AG04449 (cell line): ENCODE measurements at regions of chr5 and their contacts with region 1.

Region 1: DNA sequence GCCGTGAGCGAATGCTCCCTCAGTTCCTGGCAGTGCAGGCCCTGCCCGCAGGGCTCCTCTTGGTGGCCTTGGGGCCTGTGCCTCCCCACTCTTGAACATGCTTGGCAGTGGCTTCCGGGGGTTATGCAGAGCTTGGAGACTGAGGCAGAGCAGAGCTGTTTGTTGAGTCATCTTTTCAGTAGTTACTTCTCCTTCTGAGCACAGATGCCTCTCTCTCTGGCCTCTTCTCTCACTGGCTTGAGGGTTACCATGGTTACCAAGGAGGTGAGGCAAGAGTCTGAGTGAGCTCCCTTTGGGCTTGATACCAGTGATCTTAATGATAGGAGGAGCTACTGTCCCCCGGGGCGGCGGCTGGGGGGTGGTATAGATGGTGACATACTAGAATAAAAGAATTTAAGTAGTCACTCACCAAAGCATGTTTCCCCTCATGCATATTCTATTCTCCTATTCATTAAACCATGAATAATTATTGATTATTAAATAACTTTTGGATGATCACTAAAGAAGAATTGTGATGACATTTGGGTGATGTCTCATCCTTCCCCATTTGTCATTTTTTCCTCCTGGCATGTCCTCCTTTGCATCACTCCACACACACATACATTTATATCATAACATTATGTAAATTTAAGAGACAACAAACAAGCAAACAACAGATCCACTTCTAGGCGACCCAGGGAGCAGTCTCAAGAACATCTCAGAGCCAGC is 111.1 kb downstream of the ARHGAP26 start:
- DNase-seq: peak; percentile 65
- H3K4me3 ChIP-seq: no peak overlapping the region
- CTCF ChIP-seq: no peak

Region 2: GRCh38 chr5:142748568-142749249 is 132.5 kb before region 1 on chr5:
- CTCF ChIA-PET with region 1: interaction called, 16 read pairs
- POLR2A ChIA-PET with region 1: no interaction called
- DNase-seq: no peak
- H3K4me3 ChIP-seq: no peak overlapping the region
- CTCF ChIP-seq: no peak

Region 3: GRCh38 chr5:142769741-142770631 is 111.2 kb before region 1 on chr5 and contains the start of gene ARHGAP26:
- CTCF ChIA-PET with region 1: interaction called, 44 read pairs
- POLR2A ChIA-PET with region 1: no interaction called
- DNase-seq: peak; percentile 65
- H3K4me3 ChIP-seq: peak within 1 kb of the TSS; percentile 99
- CTCF ChIP-seq: peak; percentile 70

Region 4: DNA sequence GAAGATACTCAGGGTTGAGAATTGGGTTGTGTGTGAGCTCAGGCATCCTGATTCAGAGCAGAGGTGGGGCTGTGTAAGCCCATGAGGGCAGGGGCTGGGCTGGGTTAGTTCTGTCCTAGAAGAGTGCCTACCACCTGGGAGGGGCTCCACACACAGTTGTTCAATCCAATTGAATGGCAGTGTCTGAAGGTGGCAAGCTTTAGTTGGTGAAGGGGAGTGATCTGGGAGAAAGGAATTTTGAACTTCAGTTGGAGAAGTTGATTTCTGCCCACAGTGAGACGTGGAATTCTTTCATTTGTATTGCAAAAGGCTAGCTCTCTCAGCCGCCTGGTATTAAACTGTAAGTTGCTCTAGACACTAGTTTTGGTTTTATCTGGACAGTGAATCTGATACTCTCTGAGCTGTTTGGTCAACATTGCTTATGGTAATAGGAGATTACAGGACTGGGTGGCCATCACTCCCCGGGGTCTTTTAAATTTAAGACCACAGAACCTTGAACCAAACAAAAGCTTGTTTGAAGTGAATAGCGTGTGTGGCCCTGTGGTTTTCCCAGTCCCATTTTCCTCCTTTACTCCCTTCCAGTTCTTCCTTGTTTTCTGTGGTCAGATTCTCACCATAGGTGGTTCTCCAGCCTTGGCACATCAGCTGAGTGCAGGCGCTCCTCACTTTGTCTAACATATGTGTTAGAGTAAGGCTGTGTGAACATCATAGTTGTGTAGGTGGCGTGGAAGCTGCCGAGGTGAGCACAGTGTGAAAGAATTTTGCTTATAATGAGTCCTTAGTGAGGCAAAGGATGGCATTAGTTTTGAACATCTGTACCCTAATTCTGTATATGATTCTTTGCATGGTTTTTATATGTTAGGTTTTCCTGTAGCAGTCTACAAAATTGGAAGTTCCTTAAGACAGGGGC is 33.1 kb before region 1 on chr5:
- CTCF ChIA-PET with region 1: interaction called, 16 read pairs
- POLR2A ChIA-PET with region 1: no interaction called
- DNase-seq: peak; percentile 34
- H3K4me3 ChIP-seq: no peak overlapping the region
- CTCF ChIP-seq: no peak

Region 5: DNA sequence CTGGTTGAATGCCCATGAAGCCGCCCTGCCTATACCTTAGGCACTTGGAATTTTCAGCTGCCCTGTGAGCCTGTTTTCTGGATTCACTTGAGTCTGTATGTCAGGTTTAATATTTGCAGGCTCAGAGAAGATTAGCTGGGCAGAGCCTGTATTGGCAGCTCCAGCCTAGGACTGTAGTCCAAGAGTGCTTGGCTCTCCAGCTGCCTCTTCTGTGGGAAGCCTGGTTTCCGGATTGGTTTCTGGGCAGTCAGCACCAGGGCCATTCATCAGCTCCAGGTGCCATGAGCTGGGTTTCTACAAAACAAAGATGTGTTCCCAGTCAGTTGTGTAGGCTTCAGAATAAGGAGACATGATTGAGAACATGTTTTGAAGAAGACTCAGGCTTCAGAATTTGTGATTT is 21.0 kb before region 1 on chr5:
- CTCF ChIA-PET with region 1: interaction called, 28 read pairs
- POLR2A ChIA-PET with region 1: no interaction called
- DNase-seq: no peak
- H3K4me3 ChIP-seq: no peak overlapping the region
- CTCF ChIP-seq: no peak

Region 6: GRCh38 chr5:142894749-142895148 is 13.5 kb after region 1 on chr5:
- CTCF ChIA-PET with region 1: interaction called, 45 read pairs
- POLR2A ChIA-PET with region 1: no interaction called
- DNase-seq: peak; percentile 36
- H3K4me3 ChIP-seq: no peak overlapping the region
- CTCF ChIP-seq: no peak